GM12878 (cell line): ENCODE measurements at regions of chr9 and their contacts with region 1.

Region 1: GRCh38 chr9:28899926-28900325 is 1326.6 kb upstream of the C9orf72 start:
- DNase-seq: no peak
- ATAC-seq: no peak
- H3K4me3 ChIP-seq: no peak overlapping the region
- H3K27ac ChIP-seq: no peak overlapping the region
- H3K4me1 ChIP-seq: no peaks in the 10 kb centered on the region
- H3K27me3 ChIP-seq: no peaks in the 10 kb centered on the region
- CTCF ChIP-seq: no peak
- EP300 ChIP-seq: no peak
- POLR2A ChIP-seq: no peak
- RAD21 ChIP-seq: no peak

Region 2: DNA sequence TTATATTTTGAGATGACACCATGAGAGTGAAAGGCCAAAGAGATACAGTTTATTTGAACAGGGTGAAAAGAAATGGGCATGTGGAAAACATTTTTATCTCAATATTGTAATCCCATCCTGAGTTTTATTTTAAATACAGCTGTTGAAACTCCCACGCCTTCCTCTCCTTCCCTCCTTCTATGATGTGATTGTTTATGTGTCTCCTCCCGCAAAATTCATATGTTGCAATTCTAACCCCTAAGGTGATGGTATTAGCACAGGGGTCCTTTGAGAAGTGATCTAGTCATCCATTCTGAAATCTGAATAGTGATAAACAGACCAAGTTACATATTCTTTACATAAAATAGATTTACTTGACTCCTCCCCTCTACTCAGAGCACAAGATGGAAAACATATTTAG is 51.3 kb before region 1 on chr9:
- CTCF ChIA-PET with region 1: no interaction called
- POLR2A ChIA-PET with region 1: no interaction called
- RAD21 ChIA-PET with region 1: no interaction called
- SMC1A ChIA-PET with region 1: no interaction called
- in situ Hi-C with region 1: no loop called
- intact Hi-C with region 1: loop called (anchors 5 kb)
- DNase-seq: no peak
- ATAC-seq: no peak
- H3K4me3 ChIP-seq: no peak overlapping the region
- H3K27ac ChIP-seq: no peak overlapping the region
- H3K4me1 ChIP-seq: no peaks in the 10 kb centered on the region
- H3K27me3 ChIP-seq: no peaks in the 10 kb centered on the region
- CTCF ChIP-seq: no peak
- EP300 ChIP-seq: no peak
- POLR2A ChIP-seq: no peak
- RAD21 ChIP-seq: no peak

Region 3: GRCh38 chr9:28915256-28915930 is 15.5 kb after region 1 on chr9:
- CTCF ChIA-PET with region 1: no interaction called
- POLR2A ChIA-PET with region 1: no interaction called
- RAD21 ChIA-PET with region 1: no interaction called
- SMC1A ChIA-PET with region 1: no interaction called
- in situ Hi-C with region 1: no loop called
- intact Hi-C with region 1: no loop called
- DNase-seq: no peak
- ATAC-seq: no peak; the same call in 2 of the 3 replicates
- H3K4me3 ChIP-seq: no peak overlapping the region
- H3K27ac ChIP-seq: no peak overlapping the region
- H3K4me1 ChIP-seq: no peaks in the 10 kb centered on the region
- H3K27me3 ChIP-seq: no peaks in the 10 kb centered on the region
- CTCF ChIP-seq: no peak
- EP300 ChIP-seq: no peak
- POLR2A ChIP-seq: no peak
- RAD21 ChIP-seq: no peak